ENCODE measurements at regions of chr1 and their contacts with region 1.

Region 1: GRCh38 chr1:85033221-85033620 is 15.1 kb downstream of the MCOLN3 start:
- DNase-seq: no peak
- ATAC-seq: no peak
- H3K4me3 ChIP-seq: no peak overlapping the region
- H3K4me3 Mint-ChIP-seq: no peak overlapping the region
- H3K27ac ChIP-seq: no peak overlapping the region
- H3K27ac Mint-ChIP-seq: no peak overlapping the region
- H3K4me1 ChIP-seq: no peaks in the 10 kb centered on the region
- H3K4me1 Mint-ChIP-seq: no peaks in the 10 kb centered on the region
- H3K27me3 ChIP-seq: no peaks in the 10 kb centered on the region
- H3K27me3 Mint-ChIP-seq: peaks cover 0 to 7% of the 10 kb centered on the region in 2 donors

Region 2: DNA sequence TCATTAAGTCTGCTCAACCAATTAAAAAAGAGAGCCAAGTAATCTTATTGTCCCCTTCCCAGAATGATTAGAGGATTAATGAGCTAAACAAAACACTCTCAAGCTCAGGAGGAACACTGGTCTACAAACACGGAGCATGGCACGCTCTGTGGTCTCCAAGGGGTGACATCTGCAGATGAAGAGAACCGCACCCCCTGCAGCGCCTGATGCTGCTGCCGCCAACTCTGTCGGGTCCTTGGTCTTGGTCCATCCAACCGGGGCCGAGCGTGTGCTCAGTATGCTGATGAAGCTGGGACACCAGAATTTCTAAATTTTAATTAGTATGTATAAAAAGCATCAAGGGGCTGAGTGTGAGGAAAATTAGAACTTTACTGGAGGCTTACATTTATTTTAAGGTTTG is 222.9 kb before region 1 on chr1:
- CTCF ChIA-PET with region 1: no interaction called
- POLR2A ChIA-PET with region 1: interaction called in 1 of 2 experiments, 10 read pairs
- DNase-seq: no peak
- ATAC-seq: no peak
- H3K4me3 ChIP-seq: no peak overlapping the region
- H3K4me3 Mint-ChIP-seq: no peak overlapping the region
- H3K27ac ChIP-seq: no peak overlapping the region
- H3K27ac Mint-ChIP-seq: no peak overlapping the region
- H3K4me1 ChIP-seq: no peaks in the 10 kb centered on the region
- H3K4me1 Mint-ChIP-seq: no peaks in the 10 kb centered on the region
- H3K27me3 ChIP-seq: peaks cover 0 to 4% of the 10 kb centered on the region in 2 experiments
- H3K27me3 Mint-ChIP-seq: no peaks in the 10 kb centered on the region